ENCODE measurements at regions of chr7 and their contacts with region 1.

Region 1: DNA sequence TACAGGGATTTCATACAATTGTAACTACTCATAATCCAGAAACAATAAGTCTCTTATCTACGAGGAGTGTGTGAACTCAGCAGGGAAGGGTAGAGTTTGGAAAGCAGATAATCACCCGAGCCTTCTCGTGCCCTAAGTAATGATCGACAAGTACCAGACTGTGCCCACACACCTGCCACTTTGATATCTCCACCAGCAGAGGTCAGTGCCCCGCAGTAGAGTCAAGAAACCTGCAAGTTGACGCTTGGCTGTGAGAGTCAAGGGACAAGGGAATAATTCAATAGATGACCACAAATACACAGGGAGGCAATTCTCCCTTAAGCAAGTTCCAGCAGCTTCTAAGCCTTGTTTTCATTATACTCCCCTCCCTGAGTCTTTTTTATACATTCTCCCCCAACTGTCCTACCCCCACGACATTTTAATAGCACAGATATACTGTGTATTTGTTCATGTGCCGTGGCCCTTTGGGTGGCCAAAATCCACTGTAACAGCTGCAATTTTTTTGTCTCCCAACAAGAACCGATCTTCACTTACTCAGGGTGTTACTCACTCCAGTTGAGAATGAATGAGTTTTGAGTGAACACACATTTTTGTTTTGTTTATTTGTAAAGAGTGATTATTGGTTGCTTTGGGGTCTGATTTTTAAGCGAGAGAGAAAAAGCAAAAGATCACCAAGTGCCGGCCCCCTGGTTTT is 106.9 kb upstream of the RHEB start:
- DNase-seq: peak in 1 of 2 donors; percentile 34
- ATAC-seq: peak; percentile 49 to 76 (median 64)
- H3K4me3 ChIP-seq: no peak overlapping the region
- H3K27ac ChIP-seq: peak overlapping the region in 2 of 10 donors; percentile 3 to 25
- H3K4me1 ChIP-seq: peaks cover 0 to 66% (median 33%) of the 10 kb centered on the region in 9 donors
- H3K27me3 ChIP-seq: no peaks in the 10 kb centered on the region
- CTCF ChIP-seq: peak in 8 of 9 donors; percentile 30 to 63 (median 50)

Region 2: GRCh38 chr7:151368136-151368571 is 258.4 kb before region 1 on chr7:
- intact Hi-C with region 1: loop called in 1 of 10 experiments (anchors 5 kb)
- DNase-seq: peak; percentile 78 to 85
- ATAC-seq: peak; percentile 93 to 97 (median 96)
- H3K4me3 ChIP-seq: no peak overlapping the region
- H3K27ac ChIP-seq: no peak overlapping the region
- H3K4me1 ChIP-seq: peaks cover 0 to 15% (median 0%) of the 10 kb centered on the region in 9 donors
- H3K27me3 ChIP-seq: no peaks in the 10 kb centered on the region
- CTCF ChIP-seq: peak; percentile 85 to 98 (median 96)

Region 3: GRCh38 chr7:151519765-151520418 is 106.7 kb before region 1 on chr7 and contains the start of gene RHEB:
- intact Hi-C with region 1: loop called in 2 of 10 experiments (anchors 5 kb)
- DNase-seq: peak; percentile 98 to 99
- ATAC-seq: peak; percentile 93 to 97 (median 97)
- H3K4me3 ChIP-seq: peak within 1 kb of the TSS; percentile 69 to 84 (median 76)
- H3K27ac ChIP-seq: peak within 1 kb of the TSS; percentile 87 to 99 (median 98)
- H3K4me1 ChIP-seq: peaks cover 2 to 45% (median 41%) of the 10 kb centered on the region in 9 donors
- H3K27me3 ChIP-seq: no peaks in the 10 kb centered on the region
- CTCF ChIP-seq: peak in 1 of 9 donors; percentile 3
- total RNA-seq, gene RHEB: 87.0 to 166 (median 104) TPM

Region 4: DNA sequence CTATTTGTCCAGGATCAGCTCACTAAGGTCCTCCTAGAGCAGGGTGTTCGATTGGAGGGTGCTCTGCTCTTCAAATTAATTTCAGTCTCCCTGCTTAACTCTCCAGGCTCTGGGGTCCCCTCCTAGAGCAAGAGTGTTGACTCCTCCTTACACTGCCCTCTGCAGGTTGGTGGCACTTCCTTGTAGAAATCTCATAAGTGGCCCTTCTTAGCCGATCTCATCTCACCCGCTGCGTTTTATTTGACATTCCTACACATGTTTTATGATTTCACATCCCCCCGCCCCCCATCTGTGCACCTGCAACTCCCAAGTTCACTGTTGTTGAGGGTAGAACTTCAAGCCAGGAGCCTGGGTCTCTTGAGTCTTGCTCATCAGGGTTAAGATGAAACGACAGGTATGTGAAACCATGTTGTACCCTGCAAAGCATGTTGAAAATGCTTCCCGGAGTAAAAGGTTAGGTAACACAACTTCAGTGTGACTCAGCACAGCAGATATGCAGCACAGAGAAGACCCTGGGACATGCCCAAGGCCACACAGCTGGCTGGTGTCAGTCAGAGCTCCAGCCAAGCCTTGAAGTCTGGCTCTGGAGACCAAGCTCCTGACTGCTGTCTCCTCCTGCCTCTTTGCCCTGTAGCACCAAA is 79.2 kb after region 1 on chr7:
- intact Hi-C with region 1: loop called in 7 of 10 experiments (anchors 5 to 10 kb)
- DNase-seq: peak in 1 of 2 donors; percentile 53
- ATAC-seq: peak; percentile 21 to 72 (median 56)
- H3K4me3 ChIP-seq: peak overlapping the region in 5 of 10 donors; percentile 4 to 26 (median 18)
- H3K27ac ChIP-seq: peak overlapping the region in 3 of 10 donors; percentile 17 to 38 (median 35)
- H3K4me1 ChIP-seq: peaks cover 5 to 47% (median 31%) of the 10 kb centered on the region in 9 donors
- H3K27me3 ChIP-seq: no peaks in the 10 kb centered on the region
- CTCF ChIP-seq: peak; percentile 21 to 67 (median 54)

Region 5: GRCh38 chr7:151744656-151745638 is 118.4 kb after region 1 on chr7:
- intact Hi-C with region 1: loop called in 3 of 10 experiments (anchors 5 to 10 kb)
- DNase-seq: peak; percentile 54 to 74
- ATAC-seq: peak; percentile 66 to 95 (median 82)
- H3K4me3 ChIP-seq: no peak overlapping the region
- H3K27ac ChIP-seq: peak overlapping the region; percentile 38 to 88 (median 78)
- H3K4me1 ChIP-seq: peaks cover 11 to 42% (median 33%) of the 10 kb centered on the region in 9 donors
- H3K27me3 ChIP-seq: no peaks in the 10 kb centered on the region
- CTCF ChIP-seq: peak in 8 of 9 donors; percentile 16 to 45 (median 38)

Measured in heart right ventricle (tissue), 16 donors.